Gastrocnemius medialis (tissue), 4 donors: ENCODE measurements at regions of chr17 and their contacts with region 1.

Region 1: DNA sequence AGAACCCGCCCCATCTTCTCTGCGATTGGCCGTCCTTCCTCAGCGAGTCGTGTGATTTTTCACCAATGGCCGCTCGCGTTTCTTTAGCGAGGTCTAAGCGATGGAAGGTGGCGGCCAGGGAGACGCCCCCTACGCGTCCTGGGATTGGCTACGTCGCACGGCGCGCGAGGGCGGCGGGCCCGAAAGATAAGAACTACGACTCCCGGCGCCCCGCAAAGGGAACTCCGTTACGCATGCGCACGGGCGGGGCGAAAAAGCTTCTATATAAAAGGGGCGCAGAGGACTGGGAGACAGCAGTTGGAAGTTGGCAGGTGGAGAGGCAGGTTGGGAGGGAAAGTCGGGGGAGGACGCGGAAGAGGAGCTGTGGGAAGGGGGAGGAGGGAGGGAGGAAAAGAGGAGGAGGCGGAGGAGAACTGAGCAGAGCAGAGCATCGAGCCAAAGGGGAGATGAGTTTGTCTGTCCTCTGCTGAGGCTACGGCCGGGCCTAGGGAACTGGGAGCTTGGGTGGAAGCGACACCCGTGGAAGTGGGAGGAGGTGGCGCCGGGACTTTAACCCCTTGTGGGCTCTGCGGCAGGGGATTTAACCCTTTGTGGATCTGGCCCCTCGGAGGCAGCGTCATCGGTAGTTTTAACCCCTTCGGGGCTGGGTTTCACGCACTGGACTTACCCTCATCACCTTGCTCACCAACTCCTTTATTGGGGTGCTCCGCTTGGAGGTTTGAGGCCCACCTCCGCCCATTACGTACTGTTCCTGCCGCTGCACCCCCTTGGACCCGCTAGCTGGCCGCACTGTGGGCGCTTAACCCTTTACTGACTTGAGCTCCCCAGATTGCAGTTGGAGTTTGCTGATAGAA is at the start of gene HEXIM1:
- DNase-seq: peak; percentile 99 to 100
- ATAC-seq: peak; percentile 70
- H3K4me3 ChIP-seq: peak within 1 kb of the TSS; percentile 80 to 88 (median 84)
- H3K27ac ChIP-seq: peak within 1 kb of the TSS; percentile 90 to 98 (median 98)
- H3K4me1 ChIP-seq: peaks cover 36 to 50% of the 10 kb centered on the region in 2 donors
- H3K27me3 ChIP-seq: no peaks in the 10 kb centered on the region
- CTCF ChIP-seq: peak in 1 of 5 experiments; percentile 5
- POLR2A ChIP-seq: peak; percentile 99 to 100
- total RNA-seq, gene HEXIM1: 26.3 to 79.6 (median 36.9) TPM

Region 2: GRCh38 chr17:45161019-45161825 is 12.8 kb after region 1 on chr17:
- in situ Hi-C with region 1: no loop called
- intact Hi-C with region 1: loop called (anchors 1 kb)
- DNase-seq: peak; percentile 98 to 99
- ATAC-seq: peak; percentile 94 to 98
- H3K4me3 ChIP-seq: peak overlapping the region; percentile 85 to 99 (median 92)
- H3K27ac ChIP-seq: peak overlapping the region; percentile 96 to 100 (median 100)
- H3K4me1 ChIP-seq: peaks cover 38 to 45% of the 10 kb centered on the region in 2 donors
- H3K27me3 ChIP-seq: no peaks in the 10 kb centered on the region
- CTCF ChIP-seq: peak in 2 of 5 experiments; percentile 25 to 40
- POLR2A ChIP-seq: peak; percentile 94 to 95

Region 3: GRCh38 chr17:45170936-45171337 is 22.5 kb after region 1 on chr17:
- in situ Hi-C with region 1: no loop called
- intact Hi-C with region 1: loop called (anchors 1 kb)
- DNase-seq: peak; percentile 68 to 89
- ATAC-seq: peak; percentile 70 to 74
- H3K4me3 ChIP-seq: peak overlapping the region; percentile 40 to 52 (median 46)
- H3K27ac ChIP-seq: peak overlapping the region; percentile 88 to 99 (median 94)
- H3K4me1 ChIP-seq: peaks cover 35 to 46% of the 10 kb centered on the region in 2 donors
- H3K27me3 ChIP-seq: no peaks in the 10 kb centered on the region
- CTCF ChIP-seq: no peak
- POLR2A ChIP-seq: peak; percentile 23 to 38

Region 4: GRCh38 chr17:45197555-45198334 is 49.3 kb after region 1 on chr17:
- in situ Hi-C with region 1: loop called in 1 of 4 experiments (anchors 5 kb)
- intact Hi-C with region 1: loop called (anchors 1 kb)
- DNase-seq: peak; percentile 84 to 90
- ATAC-seq: peak; percentile 88
- H3K4me3 ChIP-seq: no peak overlapping the region
- H3K27ac ChIP-seq: peak overlapping the region; percentile 60 to 65 (median 63)
- H3K4me1 ChIP-seq: peaks cover 5 to 6% of the 10 kb centered on the region in 2 donors
- H3K27me3 ChIP-seq: no peaks in the 10 kb centered on the region
- CTCF ChIP-seq: peak; percentile 99 to 100 (median 99)
- POLR2A ChIP-seq: no peak